Sigmoid colon (tissue), 7 donors: ENCODE measurements at regions of chr6 and their contacts with region 1.

Region 1: DNA sequence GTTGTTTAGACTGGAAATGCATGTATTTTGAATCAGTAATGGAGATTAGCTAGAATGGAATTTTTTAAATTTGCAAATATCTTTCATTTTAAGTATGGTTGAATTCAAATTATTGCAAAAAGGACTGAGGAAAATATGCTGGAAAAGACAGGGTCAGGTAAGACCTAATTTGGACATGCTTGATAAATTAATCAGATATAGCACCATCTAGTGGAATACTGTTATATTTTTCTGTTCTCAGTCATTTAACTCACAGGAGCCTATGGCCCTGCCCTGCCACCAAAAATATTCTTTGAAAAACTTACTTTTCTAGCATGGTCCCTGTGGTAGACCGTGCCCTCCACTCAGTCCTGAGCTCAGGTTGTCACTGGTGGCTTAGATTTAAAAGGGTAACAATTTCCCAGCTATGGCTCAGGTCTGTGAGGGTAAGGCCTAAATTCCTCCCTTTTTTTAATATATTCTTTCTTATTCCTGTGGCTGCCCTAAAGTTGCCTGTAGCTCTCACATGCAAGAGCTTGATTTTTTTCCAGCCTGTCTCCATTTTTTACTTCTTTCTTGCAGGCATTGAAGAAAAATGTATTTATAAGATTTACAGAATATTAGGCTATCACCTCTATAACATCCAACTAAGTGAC is 25.3 kb upstream of the KIAA1586 start:
- DNase-seq: no peak
- H3K4me3 ChIP-seq: no peak overlapping the region
- H3K27ac ChIP-seq: no peak overlapping the region
- H3K4me1 ChIP-seq: no peaks in the 10 kb centered on the region
- H3K27me3 ChIP-seq: no peaks in the 10 kb centered on the region
- CTCF ChIP-seq: peak in 3 of 4 experiments; percentile 29 to 61 (median 49)
- EP300 ChIP-seq: no peak
- POLR2A ChIP-seq: no peak

Region 2: DNA sequence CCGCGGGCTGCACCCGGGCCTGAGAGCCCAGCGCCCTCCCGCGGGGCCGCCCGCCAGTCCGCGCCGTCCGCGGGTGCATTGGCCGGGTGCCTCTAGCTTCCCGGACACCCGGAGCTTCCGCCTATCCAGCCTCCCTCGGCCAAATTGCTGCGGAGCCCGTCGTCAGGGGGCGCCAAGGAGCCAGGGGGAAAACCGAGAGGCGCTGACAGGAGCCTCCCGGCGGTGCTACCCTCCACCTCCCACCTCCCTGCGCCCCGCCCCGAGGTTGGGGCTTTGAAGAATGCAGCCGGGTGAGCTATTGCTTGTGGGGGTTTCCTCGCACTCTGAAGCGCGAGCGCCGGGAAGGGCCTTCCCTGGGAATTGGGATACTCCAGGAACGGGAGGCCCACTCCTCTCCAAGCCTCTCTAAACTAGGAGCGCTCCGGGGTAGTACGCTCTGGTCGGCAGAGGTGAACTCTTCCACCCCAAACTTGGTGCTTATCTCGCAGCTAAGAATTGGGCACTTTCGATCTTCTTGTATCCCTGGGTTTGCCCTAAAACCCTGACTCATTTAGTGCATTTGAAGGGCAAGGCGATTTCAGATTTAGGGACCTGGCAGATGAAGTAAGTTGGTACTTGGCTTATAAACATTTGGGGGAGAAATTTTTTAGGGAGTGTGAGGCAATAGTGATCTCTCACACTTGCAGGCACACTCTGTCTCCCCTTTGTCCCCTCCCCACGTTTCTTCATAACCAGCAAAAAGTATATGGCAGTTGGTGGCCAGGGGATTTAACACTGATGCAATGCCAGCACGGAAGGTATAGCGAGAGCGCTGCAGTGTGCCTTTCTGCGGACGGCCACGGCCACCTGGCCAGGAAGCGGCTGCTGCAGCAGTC is 65.8 kb before region 1 on chr6:
- intact Hi-C with region 1: loop called (anchors 5 kb)
- DNase-seq: peak; percentile 91
- H3K4me3 ChIP-seq: peak overlapping the region; percentile 46 to 71 (median 68)
- H3K27ac ChIP-seq: peak overlapping the region; percentile 59 to 81 (median 78)
- H3K4me1 ChIP-seq: peaks cover 0 to 21% (median 10%) of the 10 kb centered on the region in 4 donors
- H3K27me3 ChIP-seq: no peaks in the 10 kb centered on the region
- CTCF ChIP-seq: peak in 2 of 4 experiments; percentile 60 to 65
- EP300 ChIP-seq: no peak
- POLR2A ChIP-seq: no peak